ENCODE measurements at regions of chr17 and their contacts with region 1.

Region 1: DNA sequence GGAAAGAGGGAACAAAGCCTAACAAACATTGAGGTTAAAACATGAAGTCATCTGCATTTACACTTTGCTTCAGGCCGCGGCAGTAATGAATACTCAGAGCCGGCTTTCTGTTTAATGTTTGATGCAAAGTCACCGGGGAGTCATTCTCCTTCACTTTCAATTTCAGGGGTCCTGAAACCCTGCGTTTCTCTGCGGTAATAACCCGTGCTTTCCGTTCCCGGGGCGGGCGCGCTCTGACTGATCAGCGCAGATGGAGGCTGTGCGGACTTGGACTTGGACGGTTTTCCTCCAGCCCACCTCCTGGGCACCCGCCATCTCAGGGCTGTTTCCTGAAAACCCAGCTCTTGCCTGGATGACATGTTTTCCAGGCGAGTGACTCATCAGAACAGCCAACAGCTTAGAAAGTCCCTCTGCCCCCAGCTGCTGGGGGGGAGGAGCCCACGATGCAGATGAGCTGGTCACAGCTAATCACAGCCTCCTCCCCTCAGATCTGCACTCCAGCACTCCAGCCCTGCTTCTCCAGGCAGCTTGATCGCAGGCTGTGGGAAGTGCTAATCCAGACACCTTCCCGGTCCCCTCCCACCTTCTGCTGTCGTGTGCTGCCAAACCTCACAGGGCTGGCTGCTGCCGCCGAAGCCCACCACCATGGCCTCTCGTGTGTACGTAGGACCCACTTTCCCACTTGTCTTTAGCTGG is 158.6 kb upstream of the CHMP6 start:
- DNase-seq: peak; percentile 91
- H3K4me3 Mint-ChIP-seq: peak overlapping the region; percentile 77
- H3K27ac Mint-ChIP-seq: peak overlapping the region; percentile 96
- H3K4me1 Mint-ChIP-seq: peaks cover 44% of the 10 kb centered on the region
- H3K27me3 Mint-ChIP-seq: no peaks in the 10 kb centered on the region

Region 2: GRCh38 chr17:80663781-80664206 is 169.2 kb before region 1 on chr17:
- CTCF ChIA-PET with region 1: no interaction called
- intact Hi-C with region 1: loop called (anchors 1 kb)
- DNase-seq: peak; percentile 67
- H3K4me3 Mint-ChIP-seq: peak overlapping the region; percentile 51
- H3K27ac Mint-ChIP-seq: peak overlapping the region; percentile 86
- H3K4me1 Mint-ChIP-seq: peaks cover 73% of the 10 kb centered on the region
- H3K27me3 Mint-ChIP-seq: no peaks in the 10 kb centered on the region

Region 3: DNA sequence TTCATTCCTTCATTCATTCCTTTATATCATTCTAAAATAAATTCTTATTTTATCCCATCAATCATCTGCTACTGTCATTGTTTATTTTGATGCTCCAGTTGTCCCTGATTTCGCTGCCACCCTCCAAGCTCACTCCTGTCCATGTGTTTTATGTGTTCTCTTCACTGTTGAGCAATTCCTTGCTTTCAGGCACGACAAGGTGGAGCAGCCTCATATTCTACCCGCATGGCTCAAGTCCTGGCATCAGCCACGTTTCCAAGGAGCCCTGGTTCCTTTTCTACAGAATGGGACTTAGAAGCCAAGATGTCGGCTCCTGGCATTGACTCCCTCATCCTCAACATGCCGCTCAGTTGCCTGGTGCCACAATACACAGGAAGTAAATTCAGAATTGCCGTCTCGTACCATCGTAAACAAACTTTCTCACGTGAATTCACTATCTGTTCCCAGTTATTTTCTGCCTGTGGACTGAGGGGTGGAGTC is 149.4 kb before region 1 on chr17:
- CTCF ChIA-PET with region 1: no interaction called
- intact Hi-C with region 1: no loop called
- DNase-seq: no peak
- H3K4me3 Mint-ChIP-seq: no peak overlapping the region
- H3K27ac Mint-ChIP-seq: no peak overlapping the region
- H3K4me1 Mint-ChIP-seq: peaks cover 20% of the 10 kb centered on the region
- H3K27me3 Mint-ChIP-seq: no peaks in the 10 kb centered on the region

Region 4: DNA sequence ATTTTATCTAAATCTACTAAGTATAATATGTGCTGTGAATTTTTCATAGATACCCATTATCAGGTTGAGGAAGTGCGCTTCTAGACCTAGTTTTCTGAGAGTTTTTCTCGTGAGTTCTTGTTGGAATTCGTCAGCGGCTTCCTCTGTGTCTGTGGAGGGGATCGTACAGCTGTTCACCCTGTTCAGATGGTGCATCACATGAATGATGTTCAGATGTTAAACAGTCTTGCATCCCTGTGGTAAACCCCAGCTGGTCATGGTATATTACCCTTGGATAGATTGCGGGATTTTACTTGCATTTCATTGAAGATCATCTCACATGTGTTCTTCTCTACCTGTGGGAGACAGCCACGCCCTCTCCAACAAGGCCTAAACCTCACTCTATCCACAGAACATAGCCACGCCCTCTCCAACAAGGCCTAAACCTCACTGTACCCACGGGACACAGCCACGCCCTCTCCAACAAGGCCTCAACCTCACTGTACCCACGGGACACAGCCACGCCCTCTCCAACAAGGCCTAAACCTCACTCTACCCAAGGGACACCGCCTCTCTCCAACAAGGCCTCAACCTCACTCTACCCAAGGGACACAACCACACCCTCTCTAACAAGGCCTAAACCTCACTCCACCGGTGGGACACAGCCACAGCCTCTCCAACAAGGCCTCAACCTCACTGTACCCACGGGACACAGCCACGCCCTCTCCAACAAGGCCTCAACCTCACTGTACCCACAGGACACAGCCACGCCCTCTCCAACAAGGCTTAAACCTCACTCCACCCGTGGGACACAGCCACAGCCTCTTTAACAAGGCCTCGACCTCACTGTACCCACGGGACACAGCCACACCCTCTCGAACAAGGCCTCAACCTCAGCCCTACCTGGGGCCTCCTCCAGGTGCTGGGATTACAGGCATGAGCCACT is 21.6 kb before region 1 on chr17:
- CTCF ChIA-PET with region 1: interaction called, 3 read pairs
- intact Hi-C with region 1: loop called (anchors 1 kb)
- DNase-seq: peak; percentile 3
- H3K4me3 Mint-ChIP-seq: peak overlapping the region; percentile 2
- H3K27ac Mint-ChIP-seq: peak overlapping the region; percentile 96
- H3K4me1 Mint-ChIP-seq: peaks cover 41% of the 10 kb centered on the region
- H3K27me3 Mint-ChIP-seq: no peaks in the 10 kb centered on the region

Region 5: DNA sequence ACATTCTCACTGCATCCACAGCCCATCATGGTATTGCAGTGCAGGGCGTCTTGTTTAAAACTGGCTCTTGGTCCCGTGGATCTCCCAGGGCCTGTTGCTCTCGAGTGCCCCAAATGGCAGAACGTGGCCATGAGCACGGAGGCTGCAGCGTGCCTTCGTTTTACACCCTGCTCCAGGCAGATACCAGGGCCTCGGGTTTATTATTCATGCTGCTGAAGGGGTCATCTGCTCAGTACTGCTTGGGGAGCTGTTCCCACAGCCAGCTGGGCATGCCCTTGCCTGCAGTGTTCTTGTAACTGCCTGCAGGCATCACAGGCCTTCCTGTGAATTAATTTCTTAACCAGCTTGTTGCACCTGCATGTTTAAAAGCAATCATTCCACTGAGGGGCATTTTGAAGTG is 28.9 kb after region 1 on chr17:
- CTCF ChIA-PET with region 1: interaction called, 3 read pairs
- intact Hi-C with region 1: loop called (anchors 1 kb)
- DNase-seq: peak; percentile 71
- H3K4me3 Mint-ChIP-seq: no peak overlapping the region
- H3K27ac Mint-ChIP-seq: peak overlapping the region; percentile 88
- H3K4me1 Mint-ChIP-seq: peaks cover 86% of the 10 kb centered on the region
- H3K27me3 Mint-ChIP-seq: no peaks in the 10 kb centered on the region

Region 6: DNA sequence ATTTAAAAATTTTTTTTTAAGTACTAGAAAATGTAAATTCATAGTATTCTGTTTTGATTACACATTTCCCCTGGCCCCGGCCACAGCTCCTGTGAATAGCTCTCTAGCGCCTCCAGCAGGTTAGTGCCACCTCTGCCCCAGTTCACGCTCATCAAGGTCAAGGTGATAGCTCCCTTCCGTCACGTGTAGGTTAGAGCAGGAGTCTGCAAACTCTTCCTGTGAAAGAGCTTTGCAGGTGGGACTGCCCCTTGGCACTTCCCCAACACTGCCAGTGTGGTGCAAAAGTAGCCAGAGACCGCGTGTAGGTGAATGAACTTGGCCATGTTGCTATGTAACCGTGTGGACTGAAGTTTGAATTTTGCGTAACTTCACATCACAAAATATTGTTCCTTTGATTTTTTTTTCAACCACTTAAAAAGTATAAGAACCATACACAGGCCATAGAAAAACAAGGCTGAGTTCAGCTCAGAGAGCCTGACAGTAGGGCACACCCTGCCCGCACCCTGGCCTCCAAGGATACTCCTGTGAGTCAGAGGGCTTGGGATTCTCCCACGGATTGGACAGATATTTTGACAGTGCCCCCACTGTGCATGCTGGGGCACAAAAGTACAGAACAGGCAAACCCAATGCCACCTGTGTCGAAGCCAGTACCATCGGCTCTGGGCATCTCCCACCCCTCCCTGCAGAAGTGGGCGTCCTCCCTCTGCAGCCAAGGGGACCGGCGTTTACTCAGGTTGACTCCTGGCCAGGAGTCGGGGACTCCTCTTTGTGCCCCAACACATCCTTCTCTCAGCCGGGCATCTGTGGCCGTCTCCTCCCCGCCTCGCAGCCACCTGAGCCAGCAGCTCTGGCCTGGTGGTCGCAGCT is 66.6 kb after region 1 on chr17:
- CTCF ChIA-PET with region 1: interaction called, 11 read pairs
- intact Hi-C with region 1: no loop called
- DNase-seq: peak; percentile 93
- H3K4me3 Mint-ChIP-seq: no peak overlapping the region
- H3K27ac Mint-ChIP-seq: no peak overlapping the region
- H3K4me1 Mint-ChIP-seq: peaks cover 38% of the 10 kb centered on the region
- H3K27me3 Mint-ChIP-seq: no peaks in the 10 kb centered on the region